ENCODE measurements at regions of chr1 and their contacts with region 1.

Region 1: GRCh38 chr1:172609528-172609927 is 49.4 kb upstream of the FASLG start:
- DNase-seq: peak; percentile 40
- H3K4me3 Mint-ChIP-seq: no peak overlapping the region
- H3K27ac Mint-ChIP-seq: no peak overlapping the region
- H3K4me1 Mint-ChIP-seq: peaks cover 8% of the 10 kb centered on the region
- H3K27me3 Mint-ChIP-seq: no peaks in the 10 kb centered on the region
- CTCF ChIP-seq: peak; percentile 37

Region 2: GRCh38 chr1:172449585-172450534 is 159.7 kb before region 1 on chr1:
- CTCF ChIA-PET with region 1: interaction called, 6 read pairs
- POLR2A ChIA-PET with region 1: no interaction called
- intact Hi-C with region 1: loop called (anchors 2 kb)
- DNase-seq: peak; percentile 85
- H3K4me3 Mint-ChIP-seq: no peak overlapping the region
- H3K27ac Mint-ChIP-seq: peak overlapping the region; percentile 44
- H3K4me1 Mint-ChIP-seq: peaks cover 28% of the 10 kb centered on the region
- H3K27me3 Mint-ChIP-seq: no peaks in the 10 kb centered on the region
- CTCF ChIP-seq: peak; percentile 97

Region 3: DNA sequence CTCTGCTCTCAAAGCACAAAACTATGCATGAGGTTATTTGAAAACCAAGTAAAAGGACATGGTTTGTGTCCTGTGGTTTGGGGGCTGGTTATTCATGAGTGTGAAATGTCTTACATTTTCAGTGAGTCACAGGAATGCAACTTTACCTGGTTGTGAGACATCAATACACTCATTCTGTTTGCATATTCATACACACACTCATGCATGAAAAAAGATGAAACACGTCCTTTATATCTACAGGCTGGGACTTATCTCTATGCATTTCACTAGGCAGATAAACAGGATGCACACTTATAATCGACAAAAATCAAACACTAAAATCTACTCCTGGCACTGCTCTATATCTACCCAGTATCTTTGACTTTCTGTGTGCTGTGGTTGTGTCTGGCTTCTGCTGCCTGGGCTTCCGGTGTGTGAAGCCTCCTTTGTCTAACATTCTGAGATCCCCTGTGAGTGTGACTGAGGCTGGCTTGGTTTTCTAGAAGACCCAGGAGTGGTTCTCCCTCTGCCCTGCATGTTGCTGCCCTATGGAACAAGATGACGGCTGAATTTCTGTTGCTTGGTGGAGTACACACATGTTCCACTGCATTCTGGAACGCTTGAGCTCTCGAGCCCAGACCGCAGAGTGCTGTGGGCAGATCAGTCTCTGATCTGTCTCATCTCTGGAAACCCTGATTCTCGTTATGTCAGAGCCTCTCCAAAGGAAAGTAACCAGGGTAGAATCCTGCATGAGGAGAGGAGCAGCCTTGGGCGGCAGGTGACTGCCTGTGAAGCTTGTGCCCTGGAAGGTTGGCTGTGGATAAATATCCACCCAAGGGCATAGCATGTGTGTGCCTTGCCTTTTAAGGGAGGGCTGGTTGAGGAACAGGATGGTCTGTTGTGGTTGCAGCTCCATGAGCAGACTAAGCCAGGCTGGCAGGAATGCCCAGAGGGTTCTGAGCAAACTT is 29.6 kb after region 1 on chr1:
- CTCF ChIA-PET with region 1: interaction called, 42 read pairs
- POLR2A ChIA-PET with region 1: no interaction called
- intact Hi-C with region 1: loop called (anchors 2 kb)
- DNase-seq: peak; percentile 79
- H3K4me3 Mint-ChIP-seq: peak overlapping the region; percentile 53
- H3K27ac Mint-ChIP-seq: peak overlapping the region; percentile 81
- H3K4me1 Mint-ChIP-seq: peaks cover 40% of the 10 kb centered on the region
- H3K27me3 Mint-ChIP-seq: no peaks in the 10 kb centered on the region
- CTCF ChIP-seq: no peak

Region 4: DNA sequence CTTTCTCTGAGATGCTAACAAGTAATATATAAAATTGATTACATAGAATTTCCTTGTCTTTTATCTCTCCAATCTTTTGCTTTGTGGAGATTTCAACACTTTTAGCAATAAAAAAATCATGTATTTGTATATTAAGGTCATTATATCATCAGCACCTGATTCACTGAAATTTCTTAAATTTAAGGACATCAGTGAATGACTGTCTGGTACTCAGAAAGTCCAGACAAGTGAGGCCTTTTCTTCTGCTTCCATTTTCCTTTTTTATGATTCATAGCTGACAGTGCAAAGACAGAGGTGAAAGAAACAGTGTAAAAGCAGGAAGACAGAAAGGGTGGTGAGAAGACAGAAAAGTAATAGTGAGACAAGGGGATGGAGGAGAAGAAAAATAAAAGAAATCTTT is 103.9 kb after region 1 on chr1:
- CTCF ChIA-PET with region 1: interaction called, 220 read pairs
- POLR2A ChIA-PET with region 1: interaction called, 31 read pairs
- intact Hi-C with region 1: no loop called
- DNase-seq: no peak
- H3K4me3 Mint-ChIP-seq: no peak overlapping the region
- H3K27ac Mint-ChIP-seq: no peak overlapping the region
- H3K4me1 Mint-ChIP-seq: peaks cover 15% of the 10 kb centered on the region
- H3K27me3 Mint-ChIP-seq: no peaks in the 10 kb centered on the region
- CTCF ChIP-seq: no peak

Region 5: DNA sequence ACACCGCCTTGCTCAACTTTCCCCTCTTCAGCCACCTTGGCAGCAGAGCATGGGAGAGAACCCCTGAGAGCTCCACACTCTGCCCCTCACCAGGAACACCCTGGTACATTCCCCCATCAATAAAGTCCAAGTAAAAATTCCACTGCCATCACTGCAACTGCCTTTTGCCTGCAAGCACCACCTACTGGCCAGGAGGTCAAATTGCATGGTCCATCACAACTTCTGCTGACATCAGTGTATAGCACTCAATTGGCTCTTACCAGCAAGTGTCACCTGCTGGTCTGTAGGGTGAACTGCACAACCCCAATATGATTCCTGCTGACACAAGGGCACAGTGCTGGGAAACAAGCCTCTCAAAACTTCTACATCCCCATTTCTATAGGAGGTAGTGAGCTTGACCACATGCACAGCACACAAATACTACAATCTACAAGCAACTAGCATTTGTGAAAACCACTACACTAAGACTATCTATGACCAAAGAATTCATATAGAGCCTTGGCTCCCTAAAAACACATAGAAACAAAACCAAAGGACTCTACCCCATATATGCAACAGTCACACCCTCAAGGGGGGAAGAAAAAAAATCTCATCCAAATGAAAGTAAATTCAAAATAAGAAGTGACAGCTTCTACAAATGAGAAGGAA is 118.6 kb after region 1 on chr1:
- CTCF ChIA-PET with region 1: interaction called, 220 read pairs
- POLR2A ChIA-PET with region 1: interaction called, 3 read pairs
- intact Hi-C with region 1: no loop called
- DNase-seq: peak; percentile 38
- H3K4me3 Mint-ChIP-seq: no peak overlapping the region
- H3K27ac Mint-ChIP-seq: no peak overlapping the region
- H3K4me1 Mint-ChIP-seq: peaks cover 6% of the 10 kb centered on the region
- H3K27me3 Mint-ChIP-seq: no peaks in the 10 kb centered on the region
- CTCF ChIP-seq: peak; percentile 44

Region 6: GRCh38 chr1:172778456-172779455 is 169.2 kb after region 1 on chr1:
- CTCF ChIA-PET with region 1: no interaction called
- POLR2A ChIA-PET with region 1: no interaction called
- intact Hi-C with region 1: no loop called
- DNase-seq: peak; percentile 14
- H3K4me3 Mint-ChIP-seq: no peak overlapping the region
- H3K27ac Mint-ChIP-seq: no peak overlapping the region
- H3K4me1 Mint-ChIP-seq: no peaks in the 10 kb centered on the region
- H3K27me3 Mint-ChIP-seq: no peaks in the 10 kb centered on the region
- CTCF ChIP-seq: peak; percentile 10

Measured in MCF 10A (cell line).